ENCODE measurements at regions of chr12 and their contacts with region 1.

Region 1: GRCh38 chr12:761256-761655 is 8.9 kb downstream of the WNK1 start:
- DNase-seq: no peak
- ATAC-seq: no peak
- H3K4me3 ChIP-seq: no peak overlapping the region
- H3K27ac ChIP-seq: no peak overlapping the region
- H3K4me1 ChIP-seq: peaks cover 5% of the 10 kb centered on the region
- H3K27me3 ChIP-seq: no peaks in the 10 kb centered on the region
- CTCF ChIP-seq: no peak

Region 2: DNA sequence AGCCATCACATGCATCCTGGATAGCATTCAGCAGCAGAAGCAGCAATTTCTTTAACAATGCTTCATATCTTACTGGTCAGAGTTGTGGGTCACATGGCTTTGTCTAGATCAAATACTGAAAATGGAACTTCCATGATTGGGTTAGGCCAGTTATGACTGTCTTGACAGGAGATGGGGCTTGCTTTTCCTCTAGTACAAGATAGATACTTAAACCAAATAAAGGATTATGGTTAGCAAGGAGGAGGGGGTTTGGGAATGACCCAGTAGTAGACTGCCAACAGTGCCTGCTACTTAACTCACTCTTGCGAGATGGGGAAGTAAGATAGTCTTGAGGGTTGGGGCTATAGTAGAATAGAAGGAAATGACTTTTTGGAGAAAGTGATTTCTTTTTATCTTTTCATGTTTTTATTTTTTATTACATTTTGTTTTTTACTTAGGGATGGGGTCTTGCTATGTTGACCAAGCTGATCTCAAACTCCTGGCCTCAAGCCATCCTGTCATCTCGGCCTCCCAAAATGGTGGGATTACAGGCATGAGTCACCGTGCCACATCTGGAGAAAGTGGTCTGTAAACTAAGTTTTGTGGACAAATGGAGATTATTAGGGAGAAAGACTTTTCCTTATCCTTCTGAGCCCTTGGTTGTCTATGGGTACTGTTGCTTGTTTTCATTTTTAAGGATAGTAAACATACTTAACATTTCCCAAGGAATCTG is 28.8 kb after region 1 on chr12:
- CTCF ChIA-PET with region 1: no interaction called
- POLR2A ChIA-PET with region 1: interaction called, 11 read pairs
- in situ Hi-C with region 1: no loop called
- intact Hi-C with region 1: no loop called
- DNase-seq: no peak
- ATAC-seq: no peak
- H3K4me3 ChIP-seq: no peak overlapping the region
- H3K27ac ChIP-seq: no peak overlapping the region
- H3K4me1 ChIP-seq: peaks cover 35% of the 10 kb centered on the region
- H3K27me3 ChIP-seq: no peaks in the 10 kb centered on the region
- CTCF ChIP-seq: no peak

Measured in Panc1 (cell line).